Activated T-helper 1 cell treated with anti-CD3 and anti-CD28 coated beads, Interleukin-12 subunit alpha, Interleukin-12 subunit beta, Interleukin-2, Interleukin-4 antibody, amounts not matched to agents 30 ng/mL and 10 ng/mL and 1 ng/mL, durations not matched to agents 14 hours and 24 hours and 36 hours (primary cell): ENCODE measurements at regions of chr18 and their contacts with region 1.

Region 1: DNA sequence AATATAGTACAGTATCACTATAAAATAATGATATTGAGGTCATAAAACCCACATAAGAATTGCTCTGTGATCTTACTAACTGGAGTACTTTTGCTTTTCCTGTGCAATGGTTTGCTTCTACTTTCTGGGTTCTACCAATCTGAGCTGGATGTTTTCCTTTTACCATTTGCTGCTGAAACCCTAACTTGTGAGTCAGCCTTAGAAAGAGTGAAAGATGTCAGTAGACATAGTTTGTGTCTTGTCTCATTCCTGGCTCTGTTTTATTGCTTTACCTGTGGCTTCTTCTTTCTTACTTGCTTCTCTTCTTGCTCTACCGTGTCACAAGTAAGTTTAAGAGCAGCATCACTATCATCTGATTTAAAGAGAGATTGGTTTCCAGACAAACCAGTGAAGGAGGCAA is 61.0 kb downstream of the MBD2 start:
- DNase-seq: no peak
- H3K4me3 Mint-ChIP-seq: no peak overlapping the region
- H3K27ac Mint-ChIP-seq: peak overlapping the region; percentile 42
- H3K4me1 Mint-ChIP-seq: peaks cover 52% of the 10 kb centered on the region
- H3K27me3 Mint-ChIP-seq: no peaks in the 10 kb centered on the region

Region 2: GRCh38 chr18:53991202-53991601 is 172.3 kb before region 1 on chr18:
- intact Hi-C with region 1: no loop called
- DNase-seq: no peak
- H3K4me3 Mint-ChIP-seq: no peak overlapping the region
- H3K27ac Mint-ChIP-seq: no peak overlapping the region
- H3K4me1 Mint-ChIP-seq: no peaks in the 10 kb centered on the region
- H3K27me3 Mint-ChIP-seq: peaks cover 2% of the 10 kb centered on the region

Region 3: DNA sequence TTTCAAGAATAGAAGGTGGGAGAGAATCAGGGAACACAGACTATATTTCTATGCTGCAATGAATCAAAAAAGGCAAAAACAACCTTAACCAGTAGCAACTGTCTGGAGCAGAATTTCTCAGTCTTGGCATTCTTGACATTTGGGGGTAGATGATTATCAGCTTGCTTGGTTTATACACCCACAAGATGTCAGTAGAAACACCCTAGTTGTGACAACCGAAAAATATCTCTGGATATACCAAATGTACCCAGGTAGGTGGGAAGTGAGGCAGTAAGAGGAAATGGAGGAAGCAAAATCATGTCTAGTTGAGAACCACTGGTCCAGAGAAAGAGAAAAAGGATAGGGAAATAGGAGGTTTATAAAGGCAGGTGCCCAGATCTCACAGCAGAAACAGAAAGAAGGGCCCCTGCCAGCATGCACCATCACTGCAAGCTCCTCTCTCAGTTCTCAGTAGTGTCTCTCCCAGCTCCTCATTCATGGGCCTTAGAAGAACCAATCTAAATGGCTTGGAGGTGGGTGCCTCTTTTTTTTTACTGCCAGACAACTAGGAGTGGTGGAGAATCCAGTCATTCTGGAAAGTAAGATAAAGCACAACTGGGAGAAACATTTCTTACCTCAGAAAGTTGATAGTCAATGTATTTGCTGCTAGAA is 10.7 kb after region 1 on chr18:
- intact Hi-C with region 1: loop called (anchors 1 kb)
- DNase-seq: no peak
- H3K4me3 Mint-ChIP-seq: peak overlapping the region; percentile 49
- H3K27ac Mint-ChIP-seq: peak overlapping the region; percentile 96
- H3K4me1 Mint-ChIP-seq: peaks cover 69% of the 10 kb centered on the region
- H3K27me3 Mint-ChIP-seq: no peaks in the 10 kb centered on the region

Region 4: GRCh38 chr18:54181856-54182602 is 18.6 kb after region 1 on chr18:
- intact Hi-C with region 1: loop called (anchors 1 kb)
- DNase-seq: no peak
- H3K4me3 Mint-ChIP-seq: no peak overlapping the region
- H3K27ac Mint-ChIP-seq: no peak overlapping the region
- H3K4me1 Mint-ChIP-seq: peaks cover 22% of the 10 kb centered on the region
- H3K27me3 Mint-ChIP-seq: no peaks in the 10 kb centered on the region